Breast epithelium (tissue), 4 donors: ENCODE measurements at regions of chr2 and their contacts with region 1.

Region 1: GRCh38 chr2:75968896-75969295 is 258.2 kb upstream of the GCFC2 start:
- DNase-seq: no peak
- H3K4me3 ChIP-seq: no peak overlapping the region
- H3K27ac ChIP-seq: no peak overlapping the region
- H3K4me1 ChIP-seq: no peaks in the 10 kb centered on the region
- H3K27me3 ChIP-seq: no peaks in the 10 kb centered on the region
- CTCF ChIP-seq: no peak
- POLR2A ChIP-seq: no peak

Region 2: GRCh38 chr2:76019128-76019527 is 50.2 kb after region 1 on chr2:
- intact Hi-C with region 1: loop called (anchors 2 kb)
- DNase-seq: no peak
- H3K4me3 ChIP-seq: no peak overlapping the region
- H3K27ac ChIP-seq: no peak overlapping the region
- H3K4me1 ChIP-seq: no peaks in the 10 kb centered on the region
- H3K27me3 ChIP-seq: no peaks in the 10 kb centered on the region
- CTCF ChIP-seq: no peak
- POLR2A ChIP-seq: no peak